PC-3 (cell line): ENCODE measurements at regions of chr3 and their contacts with region 1.

Region 1: DNA sequence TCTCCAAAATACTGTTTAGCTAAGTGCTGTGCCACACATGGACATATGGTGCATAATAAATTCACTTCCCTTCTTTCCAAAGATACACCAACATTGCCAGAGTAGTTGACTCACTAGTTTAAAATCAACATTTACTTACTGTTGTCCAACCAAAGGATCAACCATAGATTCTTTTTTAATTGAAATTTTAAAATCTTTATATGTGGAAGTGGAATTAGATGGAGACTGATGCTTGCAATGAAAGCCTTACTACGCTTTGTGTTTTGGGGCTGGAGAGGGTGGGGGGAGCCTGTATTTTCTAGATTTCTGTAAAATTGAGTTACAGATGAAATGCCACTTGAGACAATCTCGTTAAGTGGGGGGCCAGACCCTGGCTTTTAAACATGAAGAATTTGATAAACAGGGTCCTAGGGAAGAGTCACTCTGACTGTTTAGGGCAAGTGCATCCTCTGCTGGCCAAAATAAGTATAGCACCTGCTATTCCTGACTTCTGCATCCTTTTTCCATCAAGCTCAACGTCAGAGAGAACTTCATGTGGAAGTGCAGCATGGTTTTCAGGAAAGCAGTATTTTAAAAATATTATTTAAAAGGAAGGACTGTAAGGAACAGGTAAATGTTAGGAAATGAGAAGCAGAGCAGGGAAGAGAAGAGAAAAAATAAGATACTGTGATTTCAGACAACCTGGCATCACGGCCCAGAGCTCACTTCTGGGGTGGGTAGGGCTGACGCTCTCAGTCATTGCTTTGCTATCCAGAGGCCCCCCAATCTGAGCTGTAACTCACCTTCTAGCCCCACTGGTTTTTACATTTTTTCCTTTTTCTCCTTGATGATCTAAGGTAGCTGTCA is 76.7 kb downstream of the BOC start:
- DNase-seq: peak; percentile 85
- ATAC-seq: peak; percentile 69
- H3K4me3 ChIP-seq: peak overlapping the region; percentile 39
- H3K27ac ChIP-seq: peak overlapping the region; percentile 86
- H3K4me1 ChIP-seq: peaks cover 18% of the 10 kb centered on the region
- H3K27me3 ChIP-seq: no peaks in the 10 kb centered on the region
- CTCF ChIP-seq: peak; percentile 97

Region 2: DNA sequence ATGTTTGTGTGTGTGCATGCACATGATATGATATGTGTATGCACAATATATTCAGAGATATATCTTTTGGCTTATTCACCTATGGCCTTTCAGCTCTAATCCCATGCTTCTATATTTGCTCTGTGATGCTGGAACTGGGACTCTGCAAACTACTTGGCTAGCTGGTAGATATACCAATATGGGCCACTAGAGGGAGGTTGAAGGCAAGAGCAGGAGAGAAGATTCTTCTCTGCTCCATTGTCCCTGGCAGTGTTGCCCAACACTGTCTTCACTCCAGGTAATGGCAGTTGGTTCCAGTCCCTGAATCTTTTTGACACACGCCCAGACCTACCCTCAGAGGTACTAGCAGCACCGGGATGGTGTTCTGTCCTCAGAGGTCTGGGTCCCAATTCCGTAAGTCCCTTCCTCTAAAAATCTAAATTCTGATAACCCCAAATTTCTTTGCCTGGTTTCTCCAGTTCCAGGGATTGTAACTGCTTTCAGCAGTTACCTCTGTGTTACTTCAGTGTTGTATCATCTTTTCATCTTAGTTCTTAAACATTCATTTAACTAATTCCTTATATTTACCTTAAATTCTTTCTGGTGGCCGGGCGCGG is 252.5 kb before region 1 on chr3:
- CTCF ChIA-PET with region 1: interaction called, 3 read pairs
- POLR2A ChIA-PET with region 1: no interaction called
- intact Hi-C with region 1: loop called (anchors 5 kb)
- DNase-seq: peak; percentile 86
- ATAC-seq: peak; percentile 100
- H3K4me3 ChIP-seq: no peak overlapping the region
- H3K27ac ChIP-seq: no peak overlapping the region
- H3K4me1 ChIP-seq: no peaks in the 10 kb centered on the region
- H3K27me3 ChIP-seq: no peaks in the 10 kb centered on the region
- CTCF ChIP-seq: peak; percentile 90

Region 3: DNA sequence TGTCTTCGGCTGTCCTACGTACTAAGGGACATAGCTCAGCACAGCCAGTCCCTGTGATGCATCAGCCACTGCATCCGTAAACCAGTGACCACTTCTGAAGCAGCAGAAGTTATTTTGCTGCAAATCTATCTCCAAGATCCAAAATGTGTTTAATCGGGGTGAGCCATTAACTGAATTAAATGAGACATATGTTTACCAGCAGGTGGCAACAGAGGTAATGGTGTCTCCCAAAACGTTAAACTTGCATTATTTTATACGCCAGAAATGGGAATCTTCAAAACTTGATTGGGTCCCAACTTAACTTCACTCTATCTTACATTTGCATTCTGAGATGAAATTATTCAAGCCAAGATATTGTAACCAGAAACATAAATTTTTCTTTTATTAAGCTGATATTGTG is 152.0 kb before region 1 on chr3:
- CTCF ChIA-PET with region 1: interaction called, 10 read pairs
- POLR2A ChIA-PET with region 1: no interaction called
- intact Hi-C with region 1: loop called (anchors 1 kb)
- DNase-seq: peak; percentile 60
- ATAC-seq: peak; percentile 46
- H3K4me3 ChIP-seq: no peak overlapping the region
- H3K27ac ChIP-seq: no peak overlapping the region
- H3K4me1 ChIP-seq: peaks cover 16% of the 10 kb centered on the region; the same call in 1 of the 2 replicates
- H3K27me3 ChIP-seq: no peaks in the 10 kb centered on the region
- CTCF ChIP-seq: peak; percentile 90

Region 4: GRCh38 chr3:113211330-113212149 is 76.5 kb before region 1 on chr3 and contains the start of gene BOC:
- CTCF ChIA-PET with region 1: no interaction called
- POLR2A ChIA-PET with region 1: interaction called, 4 read pairs
- intact Hi-C with region 1: loop called (anchors 1 kb)
- DNase-seq: peak; percentile 69
- ATAC-seq: peak; percentile 74
- H3K4me3 ChIP-seq: peak within 1 kb of the TSS; percentile 86
- H3K27ac ChIP-seq: 0 out of 2 replicates have a peak within 1 kb of the TSS, but pooled peaks have one; percentile 16
- H3K4me1 ChIP-seq: peaks cover 7% of the 10 kb centered on the region
- H3K27me3 ChIP-seq: no peaks in the 10 kb centered on the region
- CTCF ChIP-seq: no peak
- total RNA-seq, gene BOC: 4.4 and 7.3 TPM in 2 replicates

Region 5: DNA sequence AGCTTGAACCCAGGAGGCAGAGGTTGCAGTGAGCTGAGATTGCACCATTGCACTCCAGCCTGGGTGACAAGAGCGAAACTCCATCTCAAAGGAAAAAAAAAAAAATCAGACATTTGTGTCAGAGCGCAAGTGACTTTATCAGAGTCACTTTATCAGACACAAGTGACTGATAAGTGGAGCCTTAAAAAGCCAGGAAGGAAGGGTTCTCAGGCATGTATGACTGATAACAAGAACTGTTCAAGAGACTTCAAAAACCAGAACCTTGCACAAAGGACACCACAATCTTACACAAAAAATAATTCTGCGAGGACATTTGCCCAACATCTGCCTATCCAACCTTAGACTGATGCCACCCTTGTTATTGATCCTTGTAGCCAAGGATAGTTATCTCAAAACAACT is 166.6 kb after region 1 on chr3:
- CTCF ChIA-PET with region 1: no interaction called
- POLR2A ChIA-PET with region 1: interaction called, 12 read pairs
- intact Hi-C with region 1: no loop called
- DNase-seq: no peak
- ATAC-seq: no peak
- H3K4me3 ChIP-seq: no peak overlapping the region
- H3K27ac ChIP-seq: no peak overlapping the region
- H3K4me1 ChIP-seq: no peaks in the 10 kb centered on the region
- H3K27me3 ChIP-seq: no peaks in the 10 kb centered on the region
- CTCF ChIP-seq: no peak